B cell (primary cell): ENCODE measurements at regions of chr9 and their contacts with region 1.

Region 1: GRCh38 chr9:131733541-131734061 is 6.3 kb downstream of the RAPGEF1 start:
- DNase-seq: peak; percentile 68
- ATAC-seq: no peak
- H3K4me3 ChIP-seq: peak overlapping the region; percentile 11 to 52 (median 29)
- H3K4me3 Mint-ChIP-seq: peak overlapping the region; percentile 78
- H3K27ac ChIP-seq: peak overlapping the region; percentile 99 to 100
- H3K27ac Mint-ChIP-seq: peak overlapping the region; percentile 88
- H3K4me1 ChIP-seq: peaks cover 86 to 97% of the 10 kb centered on the region in 2 donors
- H3K4me1 Mint-ChIP-seq: peaks cover 91% of the 10 kb centered on the region
- H3K27me3 ChIP-seq: no peaks in the 10 kb centered on the region
- H3K27me3 Mint-ChIP-seq: no peaks in the 10 kb centered on the region
- CTCF ChIP-seq: no peak

Region 2: GRCh38 chr9:131270171-131271015 is 463.2 kb before region 1 on chr9:
- CTCF ChIA-PET with region 1: no interaction called
- POLR2A ChIA-PET with region 1: no interaction called
- intact Hi-C with region 1: loop called (anchors 2 kb)
- DNase-seq: peak; percentile 69
- ATAC-seq: peak; percentile 15
- H3K4me3 ChIP-seq: peak overlapping the region; percentile 23 to 58 (median 49)
- H3K4me3 Mint-ChIP-seq: peak overlapping the region; percentile 83
- H3K27ac ChIP-seq: peak overlapping the region; percentile 86 to 91
- H3K27ac Mint-ChIP-seq: peak overlapping the region; percentile 96
- H3K4me1 ChIP-seq: peaks cover 75 to 90% of the 10 kb centered on the region in 2 donors
- H3K4me1 Mint-ChIP-seq: peaks cover 78% of the 10 kb centered on the region
- H3K27me3 ChIP-seq: no peaks in the 10 kb centered on the region
- H3K27me3 Mint-ChIP-seq: no peaks in the 10 kb centered on the region
- CTCF ChIP-seq: no peak

Region 3: GRCh38 chr9:131281119-131281965 is 452.3 kb before region 1 on chr9:
- CTCF ChIA-PET with region 1: no interaction called
- POLR2A ChIA-PET with region 1: no interaction called
- intact Hi-C with region 1: no loop called
- DNase-seq: no peak
- ATAC-seq: no peak
- H3K4me3 ChIP-seq: no peak overlapping the region
- H3K4me3 Mint-ChIP-seq: peak overlapping the region; percentile 46
- H3K27ac ChIP-seq: no peak overlapping the region
- H3K27ac Mint-ChIP-seq: peak overlapping the region; percentile 27
- H3K4me1 ChIP-seq: peaks cover 18 to 25% of the 10 kb centered on the region in 2 donors
- H3K4me1 Mint-ChIP-seq: peaks cover 23% of the 10 kb centered on the region
- H3K27me3 ChIP-seq: peaks cover 0 to 17% (median 5%) of the 10 kb centered on the region in 4 experiments
- H3K27me3 Mint-ChIP-seq: peaks cover 10% of the 10 kb centered on the region
- CTCF ChIP-seq: no peak

Region 4: DNA sequence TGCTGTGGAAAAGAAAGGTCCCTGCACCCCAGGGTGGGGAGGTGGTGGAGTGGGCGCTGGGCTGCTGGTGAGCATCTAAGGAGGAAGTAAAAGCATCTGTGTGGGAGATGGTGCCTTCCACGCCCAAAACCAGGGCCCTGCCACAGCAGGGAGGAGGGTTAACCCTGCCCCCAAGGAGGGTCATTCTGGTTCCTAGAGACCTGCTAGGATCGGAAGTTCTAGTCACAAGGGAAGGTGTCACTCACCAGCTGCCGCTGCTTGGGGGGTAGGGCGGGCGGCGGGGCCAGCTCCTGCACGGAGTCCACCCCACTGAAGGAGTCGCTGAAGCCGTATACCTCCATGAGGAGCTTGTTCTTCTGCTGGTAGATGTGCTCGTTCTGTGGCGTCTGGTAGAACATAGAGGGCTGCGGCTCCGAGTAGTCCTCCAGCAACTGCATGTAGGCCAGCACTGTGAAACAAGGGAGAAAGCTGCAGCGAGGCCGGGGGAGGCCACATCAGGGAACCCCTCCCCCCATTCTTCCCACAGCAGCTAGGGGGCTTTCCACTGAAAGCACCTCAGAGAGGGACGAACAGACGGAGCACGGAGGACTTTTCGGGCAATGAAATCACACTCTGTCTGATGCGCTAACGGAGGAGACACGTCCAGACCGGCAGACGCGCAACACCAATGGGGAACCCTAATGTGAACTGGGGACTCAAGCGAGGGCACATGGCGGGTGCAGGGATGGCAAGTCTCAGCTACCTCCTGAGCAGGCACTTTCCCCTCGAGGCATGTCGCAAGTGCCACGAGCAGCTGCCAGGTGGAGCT is 111.8 kb before region 1 on chr9:
- CTCF ChIA-PET with region 1: interaction called, 88 read pairs
- POLR2A ChIA-PET with region 1: interaction called, 5 read pairs
- intact Hi-C with region 1: no loop called
- DNase-seq: peak; percentile 75
- ATAC-seq: peak; percentile 84
- H3K4me3 ChIP-seq: peak overlapping the region in 1 of 5 experiments; percentile 18
- H3K4me3 Mint-ChIP-seq: peak overlapping the region; percentile 85
- H3K27ac ChIP-seq: peak overlapping the region; percentile 65 to 81
- H3K27ac Mint-ChIP-seq: peak overlapping the region; percentile 81
- H3K4me1 ChIP-seq: peaks cover 25 to 37% of the 10 kb centered on the region in 2 donors
- H3K4me1 Mint-ChIP-seq: peaks cover 43% of the 10 kb centered on the region
- H3K27me3 ChIP-seq: no peaks in the 10 kb centered on the region
- H3K27me3 Mint-ChIP-seq: no peaks in the 10 kb centered on the region
- CTCF ChIP-seq: no peak

Region 5: DNA sequence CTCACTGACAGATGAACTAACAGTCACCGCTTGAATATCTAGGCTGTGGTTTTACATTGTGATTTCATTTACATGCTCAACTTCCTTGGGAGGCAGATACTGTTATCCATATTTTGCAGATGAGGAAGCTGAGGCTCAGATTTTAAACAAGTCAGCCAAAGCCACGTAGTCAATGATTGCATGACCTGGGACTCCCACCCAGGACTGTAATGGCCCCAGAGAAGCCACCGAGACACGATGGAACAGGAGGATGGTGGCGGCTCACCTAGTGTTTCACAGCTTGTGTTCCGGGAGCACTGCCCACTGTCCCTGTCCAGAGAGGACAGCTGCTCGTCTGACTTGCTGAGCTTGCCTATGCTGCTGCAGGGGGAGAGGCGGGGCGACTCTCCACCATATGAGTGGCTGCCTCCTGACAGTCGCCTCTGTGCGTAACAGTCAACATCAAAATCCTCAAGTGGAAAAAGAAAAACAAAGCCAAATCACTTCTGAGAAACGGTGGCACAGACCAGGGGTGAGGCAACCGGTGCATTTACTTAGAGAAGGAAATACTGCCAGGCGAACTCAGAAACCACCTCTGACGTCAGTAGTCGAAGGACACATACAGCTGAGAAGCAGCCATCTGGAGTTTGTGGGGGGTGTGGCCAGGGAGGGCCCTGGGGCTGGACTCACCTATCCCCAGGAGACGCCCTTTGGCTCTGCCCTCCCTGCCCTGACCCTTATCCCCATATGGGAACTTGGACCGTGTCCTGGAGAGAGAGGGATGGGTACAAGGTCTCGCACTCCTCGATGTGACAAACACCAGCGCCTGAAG is 105.7 kb before region 1 on chr9:
- CTCF ChIA-PET with region 1: interaction called, 88 read pairs
- POLR2A ChIA-PET with region 1: interaction called, 8 read pairs
- intact Hi-C with region 1: loop called (anchors 1 kb)
- DNase-seq: peak; percentile 84
- ATAC-seq: peak; percentile 79
- H3K4me3 ChIP-seq: no peak overlapping the region
- H3K4me3 Mint-ChIP-seq: peak overlapping the region; percentile 89
- H3K27ac ChIP-seq: peak overlapping the region; percentile 83 to 85
- H3K27ac Mint-ChIP-seq: peak overlapping the region; percentile 94
- H3K4me1 ChIP-seq: peaks cover 24 to 52% of the 10 kb centered on the region in 2 donors
- H3K4me1 Mint-ChIP-seq: peaks cover 65% of the 10 kb centered on the region
- H3K27me3 ChIP-seq: no peaks in the 10 kb centered on the region
- H3K27me3 Mint-ChIP-seq: no peaks in the 10 kb centered on the region
- CTCF ChIP-seq: no peak

Region 6: GRCh38 chr9:131678499-131679111 is 55.0 kb before region 1 on chr9:
- CTCF ChIA-PET with region 1: interaction called, 146 read pairs
- POLR2A ChIA-PET with region 1: interaction called, 76 read pairs
- intact Hi-C with region 1: loop called (anchors 1 kb)
- DNase-seq: peak; percentile 76
- ATAC-seq: peak; percentile 87
- H3K4me3 ChIP-seq: peak overlapping the region in 2 of 5 experiments; percentile 1 to 67
- H3K4me3 Mint-ChIP-seq: peak overlapping the region; percentile 99
- H3K27ac ChIP-seq: peak overlapping the region; percentile 88 to 96
- H3K27ac Mint-ChIP-seq: peak overlapping the region; percentile 94
- H3K4me1 ChIP-seq: peaks cover 74 to 79% of the 10 kb centered on the region in 2 donors
- H3K4me1 Mint-ChIP-seq: peaks cover 94% of the 10 kb centered on the region
- H3K27me3 ChIP-seq: no peaks in the 10 kb centered on the region
- H3K27me3 Mint-ChIP-seq: no peaks in the 10 kb centered on the region
- CTCF ChIP-seq: no peak

Region 7: DNA sequence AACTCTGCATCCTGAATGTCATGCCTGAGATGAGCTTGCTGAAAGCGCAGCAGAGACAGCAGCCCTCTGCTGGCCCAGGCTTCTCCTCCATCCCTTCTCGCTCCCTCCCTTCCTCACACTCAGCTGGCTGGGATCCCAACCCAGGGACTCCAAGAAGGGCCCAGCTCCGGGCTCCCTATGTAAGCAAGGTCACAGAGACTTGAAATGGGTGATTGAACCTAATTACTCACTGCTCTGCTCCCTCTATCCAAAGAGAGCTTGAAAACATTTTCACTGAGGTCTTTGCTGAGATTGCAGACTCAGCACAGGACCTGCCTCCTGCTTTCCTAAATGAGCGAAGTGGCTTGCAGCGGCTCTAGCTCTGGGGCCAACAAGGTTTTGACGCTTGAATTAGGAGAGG is 36.5 kb before region 1 on chr9:
- CTCF ChIA-PET with region 1: interaction called, 3 read pairs
- POLR2A ChIA-PET with region 1: no interaction called
- intact Hi-C with region 1: loop called (anchors 5 kb)
- DNase-seq: no peak
- ATAC-seq: no peak
- H3K4me3 ChIP-seq: no peak overlapping the region
- H3K4me3 Mint-ChIP-seq: peak overlapping the region; percentile 75
- H3K27ac ChIP-seq: peak overlapping the region in 1 of 2 donors; percentile 35
- H3K27ac Mint-ChIP-seq: peak overlapping the region; percentile 21
- H3K4me1 ChIP-seq: peaks cover 72 to 81% of the 10 kb centered on the region in 2 donors
- H3K4me1 Mint-ChIP-seq: peaks cover 94% of the 10 kb centered on the region
- H3K27me3 ChIP-seq: no peaks in the 10 kb centered on the region
- H3K27me3 Mint-ChIP-seq: no peaks in the 10 kb centered on the region
- CTCF ChIP-seq: no peak

Region 8: DNA sequence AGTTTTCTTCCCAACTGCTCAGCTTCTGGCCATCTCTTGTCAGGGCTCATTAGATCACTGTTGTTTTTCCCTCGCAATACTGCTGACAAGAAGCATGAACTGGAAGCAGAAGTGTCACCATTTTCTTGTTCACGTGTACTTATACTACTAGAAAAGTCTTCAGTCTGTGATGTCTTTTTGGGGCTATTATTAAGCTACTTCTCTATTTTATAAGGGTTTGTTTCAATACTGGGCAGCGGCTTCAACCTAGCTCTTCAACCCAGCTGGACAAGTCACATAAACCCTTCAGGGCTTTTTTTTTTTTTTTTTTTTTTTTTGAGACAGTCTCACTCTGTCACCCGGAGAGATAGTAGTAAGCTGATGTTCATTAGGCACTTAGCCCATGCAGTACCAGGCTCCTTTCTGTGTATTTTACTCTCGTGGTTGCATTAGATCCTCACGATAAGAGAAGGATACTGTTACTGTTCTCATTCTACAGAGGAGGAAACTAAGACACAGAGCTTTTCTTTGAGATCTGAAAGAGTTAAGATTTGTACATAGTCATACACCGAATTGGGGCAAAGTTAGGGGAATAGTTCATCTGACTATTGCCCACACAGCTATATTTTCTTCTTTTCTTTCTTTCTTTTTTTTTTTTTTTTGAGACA is 14.2 kb before region 1 on chr9:
- CTCF ChIA-PET with region 1: interaction called, 12 read pairs
- POLR2A ChIA-PET with region 1: interaction called, 10 read pairs
- intact Hi-C with region 1: loop called (anchors 1 kb)
- DNase-seq: peak; percentile 64
- ATAC-seq: peak; percentile 66
- H3K4me3 ChIP-seq: peak overlapping the region in 1 of 5 experiments; percentile 30
- H3K4me3 Mint-ChIP-seq: peak overlapping the region; percentile 44
- H3K27ac ChIP-seq: peak overlapping the region; percentile 59 to 74
- H3K27ac Mint-ChIP-seq: peak overlapping the region; percentile 77
- H3K4me1 ChIP-seq: peaks cover 58 to 77% of the 10 kb centered on the region in 2 donors
- H3K4me1 Mint-ChIP-seq: peaks cover 82% of the 10 kb centered on the region
- H3K27me3 ChIP-seq: no peaks in the 10 kb centered on the region
- H3K27me3 Mint-ChIP-seq: no peaks in the 10 kb centered on the region
- CTCF ChIP-seq: no peak

Region 9: GRCh38 chr9:132274861-132275260 is 541.3 kb after region 1 on chr9:
- CTCF ChIA-PET with region 1: no interaction called
- POLR2A ChIA-PET with region 1: no interaction called
- intact Hi-C with region 1: no loop called
- DNase-seq: no peak
- ATAC-seq: no peak
- H3K4me3 ChIP-seq: no peak overlapping the region
- H3K4me3 Mint-ChIP-seq: no peak overlapping the region
- H3K27ac ChIP-seq: no peak overlapping the region
- H3K27ac Mint-ChIP-seq: no peak overlapping the region
- H3K4me1 ChIP-seq: no peaks in the 10 kb centered on the region
- H3K4me1 Mint-ChIP-seq: no peaks in the 10 kb centered on the region
- H3K27me3 ChIP-seq: no peaks in the 10 kb centered on the region
- H3K27me3 Mint-ChIP-seq: no peaks in the 10 kb centered on the region
- CTCF ChIP-seq: no peak